Ascending aorta (tissue), 2 donors: ENCODE measurements at regions of chr2 and their contacts with region 1.

Region 1: GRCh38 chr2:218301176-218301819 is 9.0 kb upstream of the TMBIM1 start:
- DNase-seq: peak in 1 of 2 donors; percentile 94
- H3K4me3 ChIP-seq: no peak overlapping the region
- H3K27ac ChIP-seq: peak overlapping the region in 1 of 2 donors; percentile 4
- H3K4me1 ChIP-seq: peaks cover 0 to 21% of the 10 kb centered on the region in 2 donors
- H3K27me3 ChIP-seq: no peaks in the 10 kb centered on the region
- CTCF ChIP-seq: peak; percentile 94 to 96 (median 95)

Region 2: DNA sequence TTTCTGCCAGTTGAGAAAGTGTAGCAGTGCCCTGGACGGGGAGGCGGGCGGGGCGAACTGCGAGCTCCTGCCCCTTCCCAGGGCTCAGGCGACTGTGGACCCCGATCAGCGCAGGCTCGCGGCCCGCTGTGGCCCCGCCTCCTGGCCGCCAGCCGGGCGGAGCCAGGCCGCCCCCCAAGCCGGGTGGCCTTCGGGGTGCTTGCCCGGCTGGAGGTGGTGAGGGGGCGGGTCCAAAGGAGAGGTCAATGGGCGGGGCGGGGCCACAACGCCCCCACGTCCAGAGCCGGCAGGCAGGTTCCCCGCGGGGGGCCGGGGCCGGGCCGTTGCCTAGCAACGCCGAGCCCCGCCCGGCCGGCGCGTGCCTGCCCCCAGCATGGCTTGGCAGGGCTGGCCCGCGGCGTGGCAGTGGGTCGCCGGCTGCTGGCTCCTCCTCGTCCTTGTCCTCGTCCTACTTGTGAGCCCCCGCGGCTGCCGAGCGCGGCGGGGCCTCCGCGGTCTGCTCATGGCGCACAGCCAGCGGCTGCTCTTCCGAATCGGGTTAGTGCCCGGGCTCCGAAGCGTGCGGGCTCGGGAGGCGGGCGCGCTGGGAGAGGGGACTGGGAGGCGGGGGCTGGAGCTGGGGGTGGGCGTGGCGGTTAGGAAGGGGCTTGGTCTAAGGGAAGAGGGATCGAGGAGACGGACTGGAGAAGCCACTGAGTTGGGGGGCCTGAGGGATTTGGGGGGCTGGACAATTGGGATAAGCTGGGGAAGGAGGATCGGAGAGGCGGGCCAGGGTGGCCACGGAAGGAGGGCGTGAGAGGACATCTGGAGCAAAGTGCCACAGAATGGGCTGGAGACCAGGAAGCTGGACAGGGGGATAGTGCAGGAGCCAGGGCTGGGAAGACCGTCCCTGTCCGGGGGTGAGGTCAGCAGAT is 21.9 kb after region 1 on chr2:
- intact Hi-C with region 1: loop called (anchors 2 kb)
- DNase-seq: peak in 1 of 2 donors; percentile 78
- H3K4me3 ChIP-seq: peak overlapping the region; percentile 63 to 74
- H3K27ac ChIP-seq: peak overlapping the region; percentile 66 to 75
- H3K4me1 ChIP-seq: peaks cover 3 to 18% of the 10 kb centered on the region in 2 donors
- H3K27me3 ChIP-seq: no peaks in the 10 kb centered on the region
- CTCF ChIP-seq: no peak

Region 3: GRCh38 chr2:218343591-218343990 is 42.3 kb after region 1 on chr2:
- intact Hi-C with region 1: loop called (anchors 5 kb)
- DNase-seq: peak in 1 of 2 donors; percentile 90
- H3K4me3 ChIP-seq: no peak overlapping the region
- H3K27ac ChIP-seq: peak overlapping the region; percentile 86 to 96
- H3K4me1 ChIP-seq: peaks cover 17 to 33% of the 10 kb centered on the region in 2 donors
- H3K27me3 ChIP-seq: no peaks in the 10 kb centered on the region
- CTCF ChIP-seq: peak in 1 of 3 experiments; percentile 22

Region 4: DNA sequence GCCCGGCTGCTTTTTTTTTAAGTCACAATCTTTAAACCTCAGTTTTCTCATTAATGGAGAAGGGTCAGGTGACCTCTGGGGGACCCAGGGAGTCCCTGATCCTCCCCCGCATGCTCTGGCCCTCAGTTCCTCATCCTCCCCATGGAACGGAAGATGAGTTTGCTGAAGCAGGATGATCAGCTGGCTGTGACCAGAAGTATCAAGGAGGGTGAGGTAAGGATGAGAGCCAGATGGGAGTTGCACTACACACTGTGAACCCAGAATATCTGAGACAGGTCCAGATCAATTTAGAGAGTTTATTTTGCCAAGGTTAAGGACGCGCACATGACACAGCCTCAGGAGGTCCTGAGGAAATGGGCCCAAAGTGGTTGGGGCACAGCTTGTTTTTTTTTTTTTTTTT is 59.1 kb after region 1 on chr2:
- intact Hi-C with region 1: loop called (anchors 1 kb)
- DNase-seq: no peak
- H3K4me3 ChIP-seq: no peak overlapping the region
- H3K27ac ChIP-seq: no peak overlapping the region
- H3K4me1 ChIP-seq: peaks cover 3 to 7% of the 10 kb centered on the region in 2 donors
- H3K27me3 ChIP-seq: no peaks in the 10 kb centered on the region
- CTCF ChIP-seq: no peak

Region 5: GRCh38 chr2:218466016-218466521 is 164.8 kb after region 1 on chr2:
- intact Hi-C with region 1: loop called (anchors 5 kb)
- DNase-seq: no peak
- H3K4me3 ChIP-seq: no peak overlapping the region
- H3K27ac ChIP-seq: no peak overlapping the region
- H3K4me1 ChIP-seq: no peaks in the 10 kb centered on the region
- H3K27me3 ChIP-seq: no peaks in the 10 kb centered on the region
- CTCF ChIP-seq: peak; percentile 29 to 59 (median 38)

Region 6: DNA sequence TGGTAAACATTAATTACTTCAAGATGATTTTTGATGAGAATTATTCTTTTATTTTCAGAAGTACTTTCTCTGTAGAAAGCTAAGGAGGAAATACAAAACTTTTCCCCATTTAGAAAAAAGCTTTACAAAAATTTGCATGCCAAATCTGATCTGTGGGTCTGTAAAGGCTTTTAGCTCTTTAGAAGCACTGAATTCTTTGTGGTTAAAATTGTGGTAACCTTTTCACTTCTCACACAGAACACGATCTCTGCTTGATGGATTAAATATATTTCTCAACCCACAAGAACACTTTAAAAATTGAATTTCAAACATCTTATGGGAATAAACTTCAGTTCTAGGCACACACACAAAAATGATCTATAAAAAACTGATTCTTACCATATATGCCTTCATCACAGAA is 181.4 kb after region 1 on chr2:
- intact Hi-C with region 1: no loop called
- DNase-seq: no peak
- H3K4me3 ChIP-seq: no peak overlapping the region
- H3K27ac ChIP-seq: no peak overlapping the region
- H3K4me1 ChIP-seq: no peaks in the 10 kb centered on the region
- H3K27me3 ChIP-seq: no peaks in the 10 kb centered on the region
- CTCF ChIP-seq: no peak